ENCODE measurements at regions of chr7 and their contacts with region 1.

Region 1: GRCh38 chr7:33062782-33063443 is 337 bp upstream of the NT5C3A start:
- DNase-seq: peak; percentile 97
- H3K4me3 Mint-ChIP-seq: peak overlapping the region; percentile 97
- H3K27ac Mint-ChIP-seq: peak overlapping the region; percentile 93
- H3K4me1 Mint-ChIP-seq: peaks cover 30% of the 10 kb centered on the region
- H3K27me3 Mint-ChIP-seq: peaks cover 3% of the 10 kb centered on the region

Region 2: DNA sequence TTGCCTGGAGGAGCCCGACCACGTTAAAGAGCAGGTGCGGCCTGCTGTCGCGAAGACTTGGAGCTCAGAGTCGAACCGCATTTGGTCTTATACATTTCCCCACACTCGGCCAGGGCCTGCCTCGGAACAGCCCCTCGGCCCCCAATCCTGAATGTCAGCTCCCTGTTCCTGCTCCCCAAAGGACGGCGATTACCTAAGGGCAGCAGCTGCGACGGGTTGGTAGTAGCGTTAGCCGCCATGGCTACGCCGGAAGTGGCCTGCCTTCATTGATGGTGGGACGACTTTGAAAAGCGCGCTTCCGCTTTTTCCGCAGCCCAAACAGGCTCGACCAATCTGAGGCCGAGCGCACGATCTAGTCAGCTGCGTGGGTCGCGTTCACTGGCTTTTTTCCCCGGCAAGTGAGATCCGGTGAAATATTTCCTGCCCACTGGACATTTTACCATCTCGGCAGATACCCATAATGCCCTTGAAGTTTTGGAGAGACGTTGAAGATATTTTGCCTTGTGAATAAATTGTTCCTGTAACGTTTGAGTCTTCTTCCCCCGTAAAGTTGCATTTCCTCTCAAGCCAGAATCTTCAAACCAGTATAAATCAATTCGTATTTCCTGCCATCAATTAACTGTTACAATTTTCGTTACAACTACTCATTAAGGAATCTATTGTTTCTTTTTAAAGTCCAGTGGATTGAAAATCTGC is 572.6 kb before region 1 on chr7 and contains the start of gene LSM5:
- intact Hi-C with region 1: loop called (anchors 2 kb)
- DNase-seq: peak; percentile 97
- H3K4me3 Mint-ChIP-seq: peak within 1 kb of the TSS; percentile 91
- H3K27ac Mint-ChIP-seq: peak within 1 kb of the TSS; percentile 95
- H3K4me1 Mint-ChIP-seq: peaks cover 22% of the 10 kb centered on the region
- H3K27me3 Mint-ChIP-seq: no peaks in the 10 kb centered on the region
- total RNA-seq, gene LSM5: 92.9 and 99.2 TPM in 2 replicates

Region 3: GRCh38 chr7:32905175-32905662 is 157.7 kb before region 1 on chr7:
- intact Hi-C with region 1: loop called (anchors 5 kb)
- DNase-seq: peak; percentile 96
- H3K4me3 Mint-ChIP-seq: peak overlapping the region; percentile 83
- H3K27ac Mint-ChIP-seq: peak overlapping the region; percentile 94
- H3K4me1 Mint-ChIP-seq: peaks cover 17% of the 10 kb centered on the region
- H3K27me3 Mint-ChIP-seq: no peaks in the 10 kb centered on the region

Region 4: DNA sequence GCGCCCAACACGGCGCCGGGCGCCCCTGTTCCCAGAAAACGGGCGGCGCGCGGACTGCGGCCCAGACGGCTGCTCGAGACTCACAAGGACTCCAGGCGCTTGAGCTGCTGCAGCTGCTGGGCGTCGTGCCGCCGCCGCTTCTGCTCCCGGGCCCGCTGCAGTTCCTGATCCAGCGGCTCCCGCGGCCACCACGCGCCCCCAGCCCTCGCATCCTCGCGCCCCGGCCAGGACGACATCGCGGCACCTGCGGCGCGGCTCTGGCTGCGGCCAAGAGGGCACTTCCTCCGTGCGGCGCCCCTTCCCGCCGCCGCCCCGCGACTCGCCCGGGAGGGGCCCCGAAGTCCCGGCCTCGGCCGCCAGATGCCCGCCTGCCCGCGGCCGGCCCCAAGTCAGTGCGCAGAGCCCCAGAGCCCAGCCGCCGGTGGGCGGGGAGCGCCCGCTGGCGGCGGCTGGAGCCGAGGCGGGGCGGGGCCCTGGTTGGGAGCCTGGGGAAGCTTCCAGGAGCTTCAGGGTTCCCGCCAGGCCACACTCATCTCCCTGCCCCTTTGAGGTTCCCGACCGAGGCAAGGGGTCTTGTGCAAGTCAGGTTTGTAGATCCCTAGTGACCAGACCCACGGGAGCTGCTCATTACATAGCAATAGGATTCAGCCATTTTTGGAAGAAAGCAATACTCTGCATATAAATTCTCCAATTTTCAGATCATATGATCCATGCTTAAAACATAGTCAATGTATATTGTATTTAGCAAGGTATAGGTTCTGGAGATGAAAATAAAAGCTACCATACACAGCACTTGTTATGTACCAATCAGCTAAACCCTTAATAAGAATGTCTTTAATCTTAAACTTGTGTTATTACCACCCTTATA is 119.9 kb before region 1 on chr7:
- intact Hi-C with region 1: loop called (anchors 2 kb)
- DNase-seq: peak; percentile 91
- H3K4me3 Mint-ChIP-seq: peak overlapping the region; percentile 93
- H3K27ac Mint-ChIP-seq: peak overlapping the region; percentile 8
- H3K4me1 Mint-ChIP-seq: peaks cover 17% of the 10 kb centered on the region
- H3K27me3 Mint-ChIP-seq: peaks cover 8% of the 10 kb centered on the region

Region 5: GRCh38 chr7:33040803-33041516 is 22.0 kb before region 1 on chr7:
- intact Hi-C with region 1: loop called (anchors 1 kb)
- DNase-seq: peak; percentile 92
- H3K4me3 Mint-ChIP-seq: peak overlapping the region; percentile 72
- H3K27ac Mint-ChIP-seq: peak overlapping the region; percentile 56
- H3K4me1 Mint-ChIP-seq: peaks cover 42% of the 10 kb centered on the region
- H3K27me3 Mint-ChIP-seq: no peaks in the 10 kb centered on the region

Region 6: GRCh38 chr7:33050535-33051318 is 12.2 kb before region 1 on chr7:
- intact Hi-C with region 1: loop called (anchors 1 kb)
- DNase-seq: peak; percentile 82
- H3K4me3 Mint-ChIP-seq: no peak overlapping the region
- H3K27ac Mint-ChIP-seq: no peak overlapping the region
- H3K4me1 Mint-ChIP-seq: peaks cover 36% of the 10 kb centered on the region
- H3K27me3 Mint-ChIP-seq: no peaks in the 10 kb centered on the region

Region 7: DNA sequence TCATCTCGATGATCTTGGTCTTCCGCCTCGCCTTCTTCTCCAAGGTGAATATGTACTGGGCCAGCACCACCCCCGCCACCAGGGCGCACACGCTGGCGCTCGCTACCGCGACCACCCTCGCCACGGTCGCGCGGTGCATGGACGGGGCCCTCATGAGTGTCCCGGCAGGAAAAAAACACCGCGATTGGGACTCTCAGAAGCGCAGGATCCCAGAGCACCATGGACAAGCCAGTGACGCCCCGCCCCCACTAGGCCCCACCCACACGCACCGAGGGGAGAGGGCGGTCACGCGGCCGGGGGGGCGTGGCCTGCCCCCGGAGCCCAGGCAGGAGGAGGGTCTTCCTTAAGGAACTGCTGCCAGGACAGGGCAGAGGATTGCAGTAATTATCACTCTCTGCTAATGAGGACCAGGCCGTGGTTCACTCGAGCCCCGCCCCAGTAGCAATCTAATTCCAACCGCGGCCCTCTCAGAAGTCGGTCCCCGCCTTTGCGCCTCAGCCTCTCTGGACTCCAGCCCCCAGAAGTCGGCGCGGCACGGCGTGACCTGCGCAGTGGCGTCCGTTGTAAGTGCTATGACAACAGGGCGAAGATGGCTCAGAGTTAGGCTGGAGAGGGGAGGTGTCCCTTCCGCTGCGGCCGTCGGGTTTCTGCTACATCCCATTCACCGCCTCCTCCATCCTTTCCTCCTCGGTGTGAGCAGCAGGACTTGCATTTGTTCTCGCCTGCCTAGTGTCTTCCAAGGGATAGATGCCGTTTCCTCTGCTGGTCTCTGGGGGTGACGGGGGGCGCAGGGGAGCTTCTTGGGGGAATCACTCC is 66.3 kb after region 1 on chr7 and contains the start of gene BBS9:
- intact Hi-C with region 1: loop called (anchors 1 kb)
- DNase-seq: peak; percentile 97
- H3K4me3 Mint-ChIP-seq: peak within 1 kb of the TSS; percentile 98
- H3K27ac Mint-ChIP-seq: peak within 1 kb of the TSS; percentile 91
- H3K4me1 Mint-ChIP-seq: peaks cover 15% of the 10 kb centered on the region
- H3K27me3 Mint-ChIP-seq: peaks cover 5% of the 10 kb centered on the region
- total RNA-seq, gene BBS9: 4.2 and 4.3 TPM in 2 replicates

Measured in activated CD4-positive, alpha-beta T cell treated with anti-CD3 and anti-CD28 coated beads, Interleukin-2, amount 10 ng/mL, durations not matched to agents 24 days and 14 days (primary cell).